Naive thymus-derived CD4-positive, alpha-beta T cell (primary cell): ENCODE measurements at regions of chr3 and their contacts with region 1.

Region 1: GRCh38 chr3:143119009-143119914 is at the start of gene CHST2:
- DNase-seq: peak; percentile 60 to 78 (median 74)
- ATAC-seq: peak; percentile 85
- H3K4me3 ChIP-seq: peak within 1 kb of the TSS; percentile 95
- H3K4me3 Mint-ChIP-seq: peak within 1 kb of the TSS; percentile 90 to 97 (median 94)
- H3K27ac ChIP-seq: peak within 1 kb of the TSS; percentile 76
- H3K27ac Mint-ChIP-seq: peak within 1 kb of the TSS; percentile 81 to 93 (median 87)
- H3K4me1 ChIP-seq: peaks cover 0 to 29% of the 10 kb centered on the region in 2 donors
- H3K4me1 Mint-ChIP-seq: peaks cover 21 to 54% (median 45%) of the 10 kb centered on the region in 7 donors
- H3K27me3 ChIP-seq: no peaks in the 10 kb centered on the region
- H3K27me3 Mint-ChIP-seq: peaks cover 0 to 19% (median 0%) of the 10 kb centered on the region in 5 donors
- total RNA-seq, gene CHST2: 3.4 to 12.3 (median 4.5) TPM

Region 2: GRCh38 chr3:142226484-142226883 is 892.8 kb before region 1 on chr3:
- CTCF ChIA-PET with region 1: no interaction called
- POLR2A ChIA-PET with region 1: no interaction called
- intact Hi-C with region 1: loop called in 1 of 2 experiments (anchors 2 kb)
- DNase-seq: no peak
- ATAC-seq: no peak
- H3K4me3 ChIP-seq: no peak overlapping the region
- H3K4me3 Mint-ChIP-seq: peak overlapping the region; percentile 62 to 94 (median 82)
- H3K27ac ChIP-seq: no peak overlapping the region
- H3K27ac Mint-ChIP-seq: peak overlapping the region in 3 of 9 donors; percentile 18 to 45 (median 33)
- H3K4me1 ChIP-seq: no peaks in the 10 kb centered on the region
- H3K4me1 Mint-ChIP-seq: peaks cover 0 to 21% (median 16%) of the 10 kb centered on the region in 7 donors
- H3K27me3 ChIP-seq: no peaks in the 10 kb centered on the region
- H3K27me3 Mint-ChIP-seq: no peaks in the 10 kb centered on the region

Region 3: DNA sequence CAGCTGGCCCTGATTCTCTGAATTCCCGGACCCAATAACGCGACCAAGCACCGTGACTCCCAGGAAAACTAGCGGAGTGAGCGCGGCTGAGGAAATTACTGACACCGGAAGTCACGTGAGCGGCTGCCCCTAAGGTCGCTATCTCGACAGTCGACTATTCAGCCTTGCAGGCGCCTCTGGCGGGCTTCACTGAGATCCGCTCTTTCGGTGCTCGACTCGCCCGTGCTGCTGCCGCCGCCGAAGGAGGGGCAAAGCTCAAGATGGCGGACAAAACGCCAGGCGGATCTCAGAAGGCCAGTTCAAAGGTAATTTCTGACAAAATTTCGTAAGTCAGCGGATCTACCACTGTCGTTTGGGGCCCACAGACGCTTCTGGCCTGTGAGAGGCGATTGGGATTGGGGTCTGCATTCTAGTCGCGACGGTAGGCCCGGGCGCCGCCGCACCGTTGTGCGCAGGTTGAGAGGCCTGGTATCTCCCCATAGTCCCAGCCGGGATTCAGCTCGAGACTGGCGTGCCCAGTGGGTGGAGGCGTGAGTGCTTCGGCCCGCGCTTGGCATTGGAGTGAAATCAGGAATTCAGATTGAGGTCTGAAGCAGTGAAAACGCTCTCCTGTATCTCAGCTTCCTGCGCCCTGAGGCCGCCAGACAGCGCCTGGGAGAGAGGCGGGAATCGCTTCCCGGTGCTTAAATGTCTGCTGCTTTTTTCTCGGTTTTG is 117.7 kb before region 1 on chr3 and contains the start of gene U2SURP:
- CTCF ChIA-PET with region 1: no interaction called
- POLR2A ChIA-PET with region 1: interaction called, 3 read pairs
- intact Hi-C with region 1: loop called (anchors 1 kb)
- DNase-seq: peak; percentile 77 to 95 (median 88)
- ATAC-seq: peak; percentile 99
- H3K4me3 ChIP-seq: peak within 1 kb of the TSS; percentile 96
- H3K4me3 Mint-ChIP-seq: peak within 1 kb of the TSS; percentile 91 to 100 (median 98)
- H3K27ac ChIP-seq: peak within 1 kb of the TSS; percentile 95
- H3K27ac Mint-ChIP-seq: peak within 1 kb of the TSS; percentile 96 to 100 (median 99)
- H3K4me1 ChIP-seq: peaks cover 13 to 20% of the 10 kb centered on the region in 2 donors
- H3K4me1 Mint-ChIP-seq: peaks cover 34 to 63% (median 53%) of the 10 kb centered on the region in 7 donors
- H3K27me3 ChIP-seq: no peaks in the 10 kb centered on the region
- H3K27me3 Mint-ChIP-seq: peaks cover 0 to 5% (median 2%) of the 10 kb centered on the region in 5 donors
- total RNA-seq, gene U2SURP: 132 to 172 (median 158) TPM

Region 4: GRCh38 chr3:143031327-143031726 is 87.9 kb before region 1 on chr3:
- CTCF ChIA-PET with region 1: no interaction called
- POLR2A ChIA-PET with region 1: no interaction called
- intact Hi-C with region 1: no loop called
- DNase-seq: no peak
- ATAC-seq: no peak
- H3K4me3 ChIP-seq: no peak overlapping the region
- H3K4me3 Mint-ChIP-seq: no peak overlapping the region
- H3K27ac ChIP-seq: no peak overlapping the region
- H3K27ac Mint-ChIP-seq: no peak overlapping the region
- H3K4me1 ChIP-seq: no peaks in the 10 kb centered on the region
- H3K4me1 Mint-ChIP-seq: peaks cover 0 to 9% (median 4%) of the 10 kb centered on the region in 7 donors
- H3K27me3 ChIP-seq: no peaks in the 10 kb centered on the region
- H3K27me3 Mint-ChIP-seq: no peaks in the 10 kb centered on the region

Region 5: GRCh38 chr3:143090486-143090885 is 28.8 kb before region 1 on chr3:
- CTCF ChIA-PET with region 1: no interaction called
- POLR2A ChIA-PET with region 1: no interaction called
- intact Hi-C with region 1: no loop called
- DNase-seq: no peak
- ATAC-seq: no peak
- H3K4me3 ChIP-seq: no peak overlapping the region
- H3K4me3 Mint-ChIP-seq: no peak overlapping the region
- H3K27ac ChIP-seq: no peak overlapping the region
- H3K27ac Mint-ChIP-seq: no peak overlapping the region
- H3K4me1 ChIP-seq: no peaks in the 10 kb centered on the region
- H3K4me1 Mint-ChIP-seq: peaks cover 0 to 6% (median 0%) of the 10 kb centered on the region in 7 donors
- H3K27me3 ChIP-seq: no peaks in the 10 kb centered on the region
- H3K27me3 Mint-ChIP-seq: no peaks in the 10 kb centered on the region

Region 6: DNA sequence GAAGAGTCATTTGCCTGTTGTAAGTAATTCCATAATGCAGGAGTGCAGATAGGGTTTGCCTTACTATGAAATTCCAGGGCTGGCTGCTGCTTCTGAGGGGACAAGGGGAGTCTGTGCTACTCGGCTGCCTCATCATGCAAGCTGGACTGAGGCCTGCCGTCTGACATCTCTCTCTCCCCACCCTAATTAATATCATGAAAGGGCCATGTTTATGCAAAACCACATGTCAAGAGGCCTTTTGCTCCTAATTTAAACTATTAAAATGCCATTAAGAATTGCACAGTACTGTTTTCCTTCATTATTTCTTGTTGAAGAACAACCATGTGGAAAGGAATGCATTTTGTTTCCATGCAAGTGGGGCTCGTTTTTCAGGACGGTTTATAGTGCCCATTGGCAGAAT is 26.6 kb after region 1 on chr3:
- CTCF ChIA-PET with region 1: no interaction called
- POLR2A ChIA-PET with region 1: no interaction called
- intact Hi-C with region 1: no loop called
- DNase-seq: no peak
- ATAC-seq: no peak
- H3K4me3 ChIP-seq: no peak overlapping the region
- H3K4me3 Mint-ChIP-seq: no peak overlapping the region
- H3K27ac ChIP-seq: no peak overlapping the region
- H3K27ac Mint-ChIP-seq: no peak overlapping the region
- H3K4me1 ChIP-seq: no peaks in the 10 kb centered on the region
- H3K4me1 Mint-ChIP-seq: peaks cover 0 to 4% (median under 1%) of the 10 kb centered on the region in 7 donors
- H3K27me3 ChIP-seq: no peaks in the 10 kb centered on the region
- H3K27me3 Mint-ChIP-seq: no peaks in the 10 kb centered on the region

Region 7: DNA sequence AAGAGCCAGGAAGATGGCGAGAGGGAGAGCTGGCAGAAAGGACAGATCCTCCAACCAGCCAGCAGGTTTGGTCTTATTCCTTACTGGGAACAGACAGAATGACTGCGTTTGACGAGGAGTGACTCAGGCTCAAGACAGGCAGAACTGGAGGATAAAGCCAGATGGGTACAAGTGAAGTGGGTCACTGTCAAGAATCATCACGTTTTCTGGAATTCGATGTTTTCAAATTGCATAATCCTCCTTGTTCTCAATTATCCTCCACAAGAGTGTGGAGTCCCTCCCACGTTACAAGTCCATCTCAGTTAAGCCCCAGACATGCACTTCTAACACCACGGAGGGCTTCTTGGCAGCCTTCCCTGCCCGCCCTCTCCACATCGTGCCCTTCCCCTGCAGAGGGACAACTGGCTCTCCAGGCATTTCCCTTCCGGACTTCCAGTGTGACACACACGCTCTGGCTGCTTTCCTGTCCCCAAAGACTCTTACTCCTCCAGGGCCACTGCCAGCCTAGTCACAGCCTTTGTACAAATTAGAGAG is 183.4 kb after region 1 on chr3:
- CTCF ChIA-PET with region 1: interaction called, 3 read pairs
- POLR2A ChIA-PET with region 1: no interaction called
- intact Hi-C with region 1: loop called (anchors 1 to 5 kb)
- DNase-seq: no peak
- ATAC-seq: no peak
- H3K4me3 ChIP-seq: no peak overlapping the region
- H3K4me3 Mint-ChIP-seq: no peak overlapping the region
- H3K27ac ChIP-seq: no peak overlapping the region
- H3K27ac Mint-ChIP-seq: peak overlapping the region in 3 of 9 donors; percentile 50 to 85 (median 55)
- H3K4me1 ChIP-seq: no peaks in the 10 kb centered on the region
- H3K4me1 Mint-ChIP-seq: peaks cover 11 to 55% (median 34%) of the 10 kb centered on the region in 7 donors
- H3K27me3 ChIP-seq: no peaks in the 10 kb centered on the region
- H3K27me3 Mint-ChIP-seq: no peaks in the 10 kb centered on the region

Region 8: DNA sequence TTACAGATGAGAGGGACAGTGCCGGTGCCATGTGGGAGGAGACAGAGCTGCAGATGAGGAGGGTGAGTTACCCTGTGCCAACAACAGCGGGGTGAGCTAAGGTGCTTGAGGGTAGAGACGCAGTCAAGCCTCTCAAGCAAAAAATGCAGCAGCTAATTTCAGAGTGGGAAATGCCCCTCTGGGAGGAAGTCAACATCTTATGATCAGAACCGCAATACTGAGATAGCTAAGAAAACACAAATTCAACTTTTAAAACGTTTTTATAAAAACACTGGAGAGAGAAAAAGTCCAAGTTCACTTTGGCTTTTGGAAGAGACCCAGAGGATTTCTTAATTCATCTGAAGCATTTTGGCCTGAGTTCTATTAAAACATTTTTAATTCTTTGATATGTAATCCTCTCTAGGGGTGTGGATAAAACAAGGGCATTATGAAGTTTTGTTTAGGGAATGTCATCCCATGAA is 409.8 kb after region 1 on chr3:
- CTCF ChIA-PET with region 1: no interaction called
- POLR2A ChIA-PET with region 1: no interaction called
- intact Hi-C with region 1: loop called in 1 of 2 experiments (anchors 10 kb)
- DNase-seq: peak in 7 of 9 donors; percentile 4 to 64 (median 37)
- ATAC-seq: peak; percentile 92
- H3K4me3 ChIP-seq: no peak overlapping the region
- H3K4me3 Mint-ChIP-seq: peak overlapping the region in 7 of 10 donors; percentile 23 to 60 (median 45)
- H3K27ac ChIP-seq: no peak overlapping the region
- H3K27ac Mint-ChIP-seq: peak overlapping the region in 8 of 9 donors; percentile 8 to 71 (median 52)
- H3K4me1 ChIP-seq: peaks cover 0 to 4% of the 10 kb centered on the region in 2 donors
- H3K4me1 Mint-ChIP-seq: peaks cover 6 to 21% (median 13%) of the 10 kb centered on the region in 7 donors
- H3K27me3 ChIP-seq: no peaks in the 10 kb centered on the region
- H3K27me3 Mint-ChIP-seq: no peaks in the 10 kb centered on the region

Region 9: GRCh38 chr3:143763564-143764162 is 644.4 kb after region 1 on chr3:
- CTCF ChIA-PET with region 1: no interaction called
- POLR2A ChIA-PET with region 1: no interaction called
- intact Hi-C with region 1: loop called (anchors 1 to 5 kb)
- DNase-seq: peak in 4 of 9 donors; percentile 19 to 50 (median 30)
- ATAC-seq: no peak
- H3K4me3 ChIP-seq: no peak overlapping the region
- H3K4me3 Mint-ChIP-seq: peak overlapping the region in 2 of 10 donors; percentile 36 to 39
- H3K27ac ChIP-seq: no peak overlapping the region
- H3K27ac Mint-ChIP-seq: peak overlapping the region in 3 of 9 donors; percentile 19 to 68 (median 66)
- H3K4me1 ChIP-seq: peaks cover 0 to 5% of the 10 kb centered on the region in 2 donors
- H3K4me1 Mint-ChIP-seq: peaks cover 0 to 40% (median 34%) of the 10 kb centered on the region in 7 donors
- H3K27me3 ChIP-seq: no peaks in the 10 kb centered on the region
- H3K27me3 Mint-ChIP-seq: peaks cover 0 to 4% (median 0%) of the 10 kb centered on the region in 5 donors